Activated T-helper 1 cell treated with anti-CD3 and anti-CD28 coated beads, Interleukin-12 subunit alpha, Interleukin-12 subunit beta, Interleukin-2, Interleukin-4 antibody, amounts not matched to agents 30 ng/mL and 10 ng/mL and 1 ng/mL, durations not matched to agents 14 hours and 24 hours and 36 hours (primary cell): ENCODE measurements at regions of chr5 and their contacts with region 1.

Region 1: DNA sequence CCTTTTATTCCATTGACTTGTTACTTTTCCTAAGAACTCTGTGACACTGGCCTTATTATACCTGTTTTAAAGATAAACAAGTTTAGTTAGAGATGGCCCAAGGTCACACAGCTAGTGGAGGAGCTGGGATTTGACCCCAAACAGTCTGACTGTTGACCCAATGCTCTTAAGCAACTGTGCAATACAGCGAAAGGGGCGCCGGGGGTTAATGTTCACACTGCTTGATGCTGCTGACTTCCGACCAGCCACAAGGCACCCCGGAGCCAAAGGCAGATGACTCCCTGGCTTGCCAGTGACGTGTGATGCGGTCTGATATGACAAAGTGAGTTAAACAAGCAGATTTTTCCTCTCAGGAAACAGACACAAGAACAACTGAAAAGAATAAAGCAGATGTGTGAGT is 23.9 kb downstream of the PIK3R1 start:
- DNase-seq: peak; percentile 69
- H3K4me3 Mint-ChIP-seq: peak overlapping the region; percentile 60
- H3K27ac Mint-ChIP-seq: peak overlapping the region; percentile 93
- H3K4me1 Mint-ChIP-seq: peaks cover 68% of the 10 kb centered on the region
- H3K27me3 Mint-ChIP-seq: no peaks in the 10 kb centered on the region

Region 2: DNA sequence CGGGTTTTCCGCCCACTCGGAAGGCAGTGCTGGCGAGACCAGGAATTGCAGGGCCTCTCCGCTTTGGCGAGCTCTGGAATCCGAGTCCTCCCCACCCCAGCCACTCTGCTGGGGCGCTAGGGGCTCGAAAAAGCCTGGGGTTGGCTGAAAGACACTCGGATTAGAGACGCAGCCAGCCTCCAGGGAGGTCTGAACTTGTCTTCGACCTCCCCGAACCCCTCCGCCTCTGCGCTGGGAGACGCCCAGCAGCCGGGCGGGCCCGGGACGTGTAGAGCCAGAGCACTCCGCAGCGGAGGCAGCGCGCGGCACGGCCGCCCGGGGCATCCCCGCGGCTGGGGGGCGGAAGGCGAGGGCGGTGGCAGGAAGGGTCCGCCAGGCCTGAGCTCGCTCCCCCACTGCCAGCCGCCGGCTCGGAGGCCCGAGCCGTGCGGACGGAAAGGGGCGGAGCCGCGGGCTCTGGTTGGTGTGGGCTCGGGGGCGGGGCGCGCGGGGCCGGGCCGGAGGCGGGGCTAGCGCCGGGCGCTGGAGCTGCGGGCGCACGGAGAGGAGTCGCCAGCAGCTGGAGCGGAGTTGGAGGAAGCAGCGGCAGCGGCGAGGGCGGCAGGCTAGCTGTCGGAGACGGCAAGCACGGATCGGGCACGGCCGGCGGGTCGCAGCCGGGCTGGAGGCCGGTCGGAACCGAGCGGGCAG is 24.1 kb before region 1 on chr5 and contains the start of gene PIK3R1:
- intact Hi-C with region 1: loop called (anchors 1 kb)
- DNase-seq: peak; percentile 88
- H3K4me3 Mint-ChIP-seq: peak within 1 kb of the TSS; percentile 91
- H3K27ac Mint-ChIP-seq: peak within 1 kb of the TSS; percentile 93
- H3K4me1 Mint-ChIP-seq: peaks cover 37% of the 10 kb centered on the region
- H3K27me3 Mint-ChIP-seq: no peaks in the 10 kb centered on the region
- total RNA-seq, gene PIK3R1: 43.3 and 46.2 TPM in 2 replicates

Region 3: GRCh38 chr5:68227532-68228160 is 11.8 kb before region 1 on chr5:
- intact Hi-C with region 1: loop called (anchors 1 kb)
- DNase-seq: no peak
- H3K4me3 Mint-ChIP-seq: no peak overlapping the region
- H3K27ac Mint-ChIP-seq: no peak overlapping the region
- H3K4me1 Mint-ChIP-seq: peaks cover 76% of the 10 kb centered on the region
- H3K27me3 Mint-ChIP-seq: no peaks in the 10 kb centered on the region

Region 4: DNA sequence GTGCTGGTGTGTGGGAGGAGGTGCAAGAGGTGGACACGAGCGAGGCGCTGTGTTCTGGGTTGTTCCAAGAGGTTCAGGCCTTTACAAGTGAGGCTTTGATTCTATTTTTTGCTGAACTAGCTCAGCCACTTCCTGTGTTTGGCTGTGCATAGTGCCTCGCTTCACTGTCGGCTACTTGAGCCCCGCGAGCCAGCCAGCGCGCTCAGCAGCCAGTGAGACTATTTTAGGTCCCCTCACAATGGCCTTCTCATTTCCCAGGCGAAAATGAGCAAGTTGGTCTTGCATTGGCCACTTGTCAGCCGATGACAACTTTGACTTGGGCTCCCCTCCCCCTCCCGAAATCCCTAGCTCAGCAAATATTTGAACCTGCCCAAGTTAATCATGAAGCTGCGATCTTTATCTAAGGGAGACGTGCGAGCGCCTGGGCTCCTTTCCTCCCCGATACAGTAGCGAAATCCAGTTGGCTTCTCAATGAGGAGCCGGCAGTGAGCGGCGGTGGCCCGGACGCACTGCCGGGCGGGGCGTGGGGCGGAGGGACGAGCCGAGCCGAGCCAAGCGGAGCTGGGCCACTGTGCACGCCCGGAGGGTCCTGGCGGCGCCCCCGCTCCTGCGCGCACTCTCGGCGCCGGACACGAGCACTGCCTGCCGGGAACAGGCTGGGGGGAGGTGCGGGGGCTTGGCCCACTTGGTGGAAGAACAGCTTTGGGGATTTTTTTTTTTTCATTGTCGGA is 48.7 kb after region 1 on chr5:
- intact Hi-C with region 1: no loop called
- DNase-seq: peak; percentile 36
- H3K4me3 Mint-ChIP-seq: peak overlapping the region; percentile 88
- H3K27ac Mint-ChIP-seq: peak overlapping the region; percentile 81
- H3K4me1 Mint-ChIP-seq: peaks cover 85% of the 10 kb centered on the region
- H3K27me3 Mint-ChIP-seq: no peaks in the 10 kb centered on the region